ENCODE measurements at regions of chr4 and their contacts with region 1.

Region 1: DNA sequence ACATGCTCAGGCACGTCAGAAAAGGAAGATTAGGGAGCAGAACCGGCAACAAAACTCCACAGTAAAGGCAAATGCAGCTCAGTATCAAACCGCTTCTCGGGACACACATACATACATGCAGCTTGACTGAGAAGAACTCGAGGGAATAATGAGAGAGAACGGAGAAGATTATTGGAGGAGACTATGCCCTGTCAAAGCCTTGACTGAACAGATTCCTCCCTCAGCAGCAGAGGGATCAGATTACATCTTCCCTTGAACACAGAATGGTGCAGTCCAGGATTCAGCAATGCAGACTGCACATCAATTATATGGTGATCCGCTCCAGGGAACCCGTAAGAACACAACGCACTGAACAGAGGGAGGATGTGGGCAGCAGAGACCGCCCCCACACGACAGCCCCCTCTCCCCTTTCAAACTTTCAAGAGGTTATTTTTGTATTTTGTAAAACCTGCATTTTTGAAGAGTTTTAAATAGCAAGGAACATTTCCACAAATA is 183.2 kb downstream of the FBXW7 start:
- DNase-seq: peak; percentile 96
- H3K4me3 Mint-ChIP-seq: peak overlapping the region; percentile 82
- H3K27ac Mint-ChIP-seq: peak overlapping the region; percentile 83
- H3K4me1 Mint-ChIP-seq: peaks cover 29% of the 10 kb centered on the region
- H3K27me3 Mint-ChIP-seq: no peaks in the 10 kb centered on the region
- CTCF ChIP-seq: no peak

Region 2: GRCh38 chr4:151760712-151761527 is 591.7 kb before region 1 on chr4 and contains the start of gene GATB:
- CTCF ChIA-PET with region 1: interaction called, 3 read pairs
- POLR2A ChIA-PET with region 1: interaction called, 10 read pairs
- intact Hi-C with region 1: no loop called
- DNase-seq: peak; percentile 98
- H3K4me3 Mint-ChIP-seq: peak within 1 kb of the TSS; percentile 98
- H3K27ac Mint-ChIP-seq: peak within 1 kb of the TSS; percentile 99
- H3K4me1 Mint-ChIP-seq: peaks cover 6% of the 10 kb centered on the region
- H3K27me3 Mint-ChIP-seq: no peaks in the 10 kb centered on the region
- CTCF ChIP-seq: peak; percentile 34
- total RNA-seq, gene GATB: 15.9 and 17.8 TPM in 2 replicates

Region 3: DNA sequence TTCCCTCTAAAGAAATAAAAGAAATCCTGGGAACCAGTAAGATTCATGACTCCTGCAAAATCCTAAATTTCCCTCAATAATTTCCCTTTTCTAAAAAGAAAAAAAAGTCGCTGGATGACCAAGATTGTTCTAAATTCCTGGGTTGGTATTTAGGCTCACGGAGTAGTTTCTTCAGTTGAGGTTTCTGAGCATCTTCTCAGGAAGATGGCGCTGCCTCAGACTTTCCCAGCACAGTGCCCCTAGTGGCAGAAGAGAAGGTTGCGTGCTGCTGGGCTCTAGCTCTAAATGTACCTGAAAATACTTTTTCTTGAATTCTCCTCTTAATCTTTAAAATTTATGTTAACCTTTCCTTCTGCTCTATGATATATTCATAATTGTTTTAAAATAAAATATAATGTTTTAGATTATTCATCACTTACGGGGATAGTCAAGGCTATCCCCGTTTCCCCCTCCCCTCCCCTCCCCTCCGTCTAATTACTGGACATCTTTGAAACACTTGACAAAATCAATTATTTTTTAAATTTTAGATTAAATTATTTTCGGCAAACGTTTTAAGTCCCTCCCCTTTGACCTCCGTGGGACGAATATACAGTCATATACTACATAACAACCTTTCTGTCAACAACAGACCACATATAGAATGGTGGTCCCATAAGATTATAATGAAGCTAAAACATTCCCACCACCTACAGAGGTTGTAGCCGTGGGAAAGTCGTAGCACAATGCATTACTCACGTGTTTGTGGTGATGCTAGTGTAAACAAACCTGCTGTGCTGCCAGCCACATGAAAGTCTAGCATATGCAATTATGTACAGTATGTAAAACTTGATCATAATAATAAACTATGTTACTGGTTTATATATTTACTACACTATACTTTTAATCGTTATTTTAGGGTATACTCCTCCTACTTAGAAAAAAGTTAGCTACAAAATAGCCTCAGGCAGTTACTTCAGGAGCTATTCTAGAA is 550.8 kb before region 1 on chr4:
- CTCF ChIA-PET with region 1: interaction called, 3 read pairs
- POLR2A ChIA-PET with region 1: no interaction called
- intact Hi-C with region 1: loop called (anchors 2 kb)
- DNase-seq: peak; percentile 67
- H3K4me3 Mint-ChIP-seq: no peak overlapping the region
- H3K27ac Mint-ChIP-seq: no peak overlapping the region
- H3K4me1 Mint-ChIP-seq: peaks cover 7% of the 10 kb centered on the region
- H3K27me3 Mint-ChIP-seq: no peaks in the 10 kb centered on the region
- CTCF ChIP-seq: peak; percentile 83

Region 4: DNA sequence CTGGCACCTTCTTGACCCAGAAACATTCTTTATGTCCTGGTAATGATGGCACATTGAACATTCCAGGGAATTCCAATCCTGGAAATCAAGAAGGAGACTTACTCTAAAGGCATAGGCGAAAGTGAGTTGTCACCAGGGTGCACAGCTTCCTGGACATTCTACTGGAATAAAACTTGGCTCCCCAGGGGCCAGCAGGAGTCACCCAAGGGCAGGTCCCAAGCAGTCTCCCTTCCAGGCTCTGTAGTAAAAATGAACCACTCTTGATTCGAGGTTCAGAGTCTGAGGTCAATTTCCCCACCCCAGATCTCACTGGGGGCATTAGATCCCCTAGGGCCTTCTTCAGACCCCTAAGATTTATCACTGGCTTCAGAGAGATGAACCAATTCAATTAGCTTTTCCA is 253.1 kb before region 1 on chr4:
- CTCF ChIA-PET with region 1: no interaction called
- POLR2A ChIA-PET with region 1: interaction called, 3 read pairs
- intact Hi-C with region 1: loop called (anchors 1 kb)
- DNase-seq: no peak
- H3K4me3 Mint-ChIP-seq: no peak overlapping the region
- H3K27ac Mint-ChIP-seq: no peak overlapping the region
- H3K4me1 Mint-ChIP-seq: peaks cover 17% of the 10 kb centered on the region
- H3K27me3 Mint-ChIP-seq: no peaks in the 10 kb centered on the region
- CTCF ChIP-seq: no peak

Region 5: GRCh38 chr4:152255437-152256011 is 97.1 kb before region 1 on chr4:
- CTCF ChIA-PET with region 1: interaction called, 5 read pairs
- POLR2A ChIA-PET with region 1: interaction called, 12 read pairs
- intact Hi-C with region 1: loop called (anchors 5 kb)
- DNase-seq: peak; percentile 57
- H3K4me3 Mint-ChIP-seq: no peak overlapping the region
- H3K27ac Mint-ChIP-seq: no peak overlapping the region
- H3K4me1 Mint-ChIP-seq: peaks cover 19% of the 10 kb centered on the region
- H3K27me3 Mint-ChIP-seq: no peaks in the 10 kb centered on the region
- CTCF ChIP-seq: no peak

Region 6: GRCh38 chr4:152265149-152265621 is 87.5 kb before region 1 on chr4:
- CTCF ChIA-PET with region 1: interaction called, 7 read pairs
- POLR2A ChIA-PET with region 1: interaction called, 26 read pairs
- intact Hi-C with region 1: no loop called
- DNase-seq: peak; percentile 87
- H3K4me3 Mint-ChIP-seq: peak overlapping the region; percentile 50
- H3K27ac Mint-ChIP-seq: peak overlapping the region; percentile 74
- H3K4me1 Mint-ChIP-seq: peaks cover 25% of the 10 kb centered on the region
- H3K27me3 Mint-ChIP-seq: no peaks in the 10 kb centered on the region
- CTCF ChIP-seq: no peak

Region 7: GRCh38 chr4:152328596-152328995 is 24.1 kb before region 1 on chr4:
- CTCF ChIA-PET with region 1: interaction called, 5 read pairs
- POLR2A ChIA-PET with region 1: interaction called, 26 read pairs
- intact Hi-C with region 1: no loop called
- DNase-seq: peak; percentile 87
- H3K4me3 Mint-ChIP-seq: no peak overlapping the region
- H3K27ac Mint-ChIP-seq: peak overlapping the region; percentile 49
- H3K4me1 Mint-ChIP-seq: peaks cover 24% of the 10 kb centered on the region
- H3K27me3 Mint-ChIP-seq: no peaks in the 10 kb centered on the region
- CTCF ChIP-seq: no peak